ENCODE measurements at regions of chr6 and their contacts with region 1.

Region 1: GRCh38 chr6:159862103-159862502 is 28.7 kb upstream of the MAS1 start:
- DNase-seq: peak in 7 of 9 donors; percentile 46 to 77 (median 69)
- ATAC-seq: peak; percentile 77
- H3K4me3 ChIP-seq: no peak overlapping the region
- H3K4me3 Mint-ChIP-seq: peak overlapping the region; percentile 1 to 75 (median 50)
- H3K27ac ChIP-seq: peak overlapping the region; percentile 4
- H3K27ac Mint-ChIP-seq: peak overlapping the region in 8 of 9 donors; percentile 11 to 83 (median 65)
- H3K4me1 ChIP-seq: peaks cover 0 to 20% of the 10 kb centered on the region in 2 donors
- H3K4me1 Mint-ChIP-seq: peaks cover 14 to 29% (median 25%) of the 10 kb centered on the region in 7 donors
- H3K27me3 ChIP-seq: peaks cover 0 to 7% of the 10 kb centered on the region in 2 donors
- H3K27me3 Mint-ChIP-seq: peaks cover 0 to 17% (median 0%) of the 10 kb centered on the region in 5 donors

Region 2: GRCh38 chr6:158026054-158026900 is 1835.8 kb before region 1 on chr6:
- CTCF ChIA-PET with region 1: no interaction called
- POLR2A ChIA-PET with region 1: no interaction called
- intact Hi-C with region 1: no loop called
- DNase-seq: peak; percentile 67 to 94 (median 82)
- ATAC-seq: peak; percentile 84
- H3K4me3 ChIP-seq: peak overlapping the region; percentile 44
- H3K4me3 Mint-ChIP-seq: peak overlapping the region; percentile 79 to 86 (median 84)
- H3K27ac ChIP-seq: peak overlapping the region; percentile 73
- H3K27ac Mint-ChIP-seq: peak overlapping the region; percentile 88 to 98 (median 97)
- H3K4me1 ChIP-seq: peaks cover 22 to 23% of the 10 kb centered on the region in 2 donors
- H3K4me1 Mint-ChIP-seq: peaks cover 20 to 40% (median 35%) of the 10 kb centered on the region in 7 donors
- H3K27me3 ChIP-seq: no peaks in the 10 kb centered on the region
- H3K27me3 Mint-ChIP-seq: no peaks in the 10 kb centered on the region

Region 3: GRCh38 chr6:159427771-159428170 is 434.3 kb before region 1 on chr6:
- CTCF ChIA-PET with region 1: no interaction called
- POLR2A ChIA-PET with region 1: no interaction called
- intact Hi-C with region 1: no loop called
- DNase-seq: no peak
- ATAC-seq: no peak
- H3K4me3 ChIP-seq: no peak overlapping the region
- H3K4me3 Mint-ChIP-seq: no peak overlapping the region
- H3K27ac ChIP-seq: no peak overlapping the region
- H3K27ac Mint-ChIP-seq: no peak overlapping the region
- H3K4me1 ChIP-seq: no peaks in the 10 kb centered on the region
- H3K4me1 Mint-ChIP-seq: no peaks in the 10 kb centered on the region
- H3K27me3 ChIP-seq: no peaks in the 10 kb centered on the region
- H3K27me3 Mint-ChIP-seq: peaks cover 4 to 33% (median 23%) of the 10 kb centered on the region in 5 donors

Region 4: GRCh38 chr6:159766906-159767305 is 95.2 kb before region 1 on chr6:
- CTCF ChIA-PET with region 1: no interaction called
- POLR2A ChIA-PET with region 1: no interaction called
- intact Hi-C with region 1: no loop called
- DNase-seq: no peak
- ATAC-seq: no peak
- H3K4me3 ChIP-seq: no peak overlapping the region
- H3K4me3 Mint-ChIP-seq: no peak overlapping the region
- H3K27ac ChIP-seq: no peak overlapping the region
- H3K27ac Mint-ChIP-seq: peak overlapping the region in 1 of 9 donors; percentile 55
- H3K4me1 ChIP-seq: peaks cover 6 to 9% of the 10 kb centered on the region in 2 donors
- H3K4me1 Mint-ChIP-seq: peaks cover 11 to 29% (median 14%) of the 10 kb centered on the region in 7 donors
- H3K27me3 ChIP-seq: no peaks in the 10 kb centered on the region
- H3K27me3 Mint-ChIP-seq: no peaks in the 10 kb centered on the region

Region 5: GRCh38 chr6:159941286-159942113 is 79.4 kb after region 1 on chr6:
- CTCF ChIA-PET with region 1: no interaction called
- POLR2A ChIA-PET with region 1: no interaction called
- intact Hi-C with region 1: loop called (anchors 1 kb)
- DNase-seq: peak in 7 of 9 donors; percentile 23 to 55 (median 40)
- ATAC-seq: peak; percentile 85
- H3K4me3 ChIP-seq: no peak overlapping the region
- H3K4me3 Mint-ChIP-seq: no peak overlapping the region
- H3K27ac ChIP-seq: no peak overlapping the region
- H3K27ac Mint-ChIP-seq: no peak overlapping the region
- H3K4me1 ChIP-seq: no peaks in the 10 kb centered on the region
- H3K4me1 Mint-ChIP-seq: peaks cover 0 to 7% (median 0%) of the 10 kb centered on the region in 7 donors
- H3K27me3 ChIP-seq: no peaks in the 10 kb centered on the region
- H3K27me3 Mint-ChIP-seq: peaks cover 0 to 28% (median 3%) of the 10 kb centered on the region in 5 donors

Region 6: GRCh38 chr6:160041608-160042007 is 179.5 kb after region 1 on chr6:
- CTCF ChIA-PET with region 1: no interaction called
- POLR2A ChIA-PET with region 1: no interaction called
- intact Hi-C with region 1: loop called in 1 of 2 experiments (anchors 10 kb)
- DNase-seq: peak in 2 of 9 donors; percentile 17 to 27
- ATAC-seq: peak; percentile 29
- H3K4me3 ChIP-seq: no peak overlapping the region
- H3K4me3 Mint-ChIP-seq: no peak overlapping the region
- H3K27ac ChIP-seq: no peak overlapping the region
- H3K27ac Mint-ChIP-seq: peak overlapping the region in 1 of 9 donors; percentile 39
- H3K4me1 ChIP-seq: peaks cover 0 to 7% of the 10 kb centered on the region in 2 donors
- H3K4me1 Mint-ChIP-seq: peaks cover 5 to 35% (median 30%) of the 10 kb centered on the region in 7 donors
- H3K27me3 ChIP-seq: no peaks in the 10 kb centered on the region
- H3K27me3 Mint-ChIP-seq: no peaks in the 10 kb centered on the region

Region 7: DNA sequence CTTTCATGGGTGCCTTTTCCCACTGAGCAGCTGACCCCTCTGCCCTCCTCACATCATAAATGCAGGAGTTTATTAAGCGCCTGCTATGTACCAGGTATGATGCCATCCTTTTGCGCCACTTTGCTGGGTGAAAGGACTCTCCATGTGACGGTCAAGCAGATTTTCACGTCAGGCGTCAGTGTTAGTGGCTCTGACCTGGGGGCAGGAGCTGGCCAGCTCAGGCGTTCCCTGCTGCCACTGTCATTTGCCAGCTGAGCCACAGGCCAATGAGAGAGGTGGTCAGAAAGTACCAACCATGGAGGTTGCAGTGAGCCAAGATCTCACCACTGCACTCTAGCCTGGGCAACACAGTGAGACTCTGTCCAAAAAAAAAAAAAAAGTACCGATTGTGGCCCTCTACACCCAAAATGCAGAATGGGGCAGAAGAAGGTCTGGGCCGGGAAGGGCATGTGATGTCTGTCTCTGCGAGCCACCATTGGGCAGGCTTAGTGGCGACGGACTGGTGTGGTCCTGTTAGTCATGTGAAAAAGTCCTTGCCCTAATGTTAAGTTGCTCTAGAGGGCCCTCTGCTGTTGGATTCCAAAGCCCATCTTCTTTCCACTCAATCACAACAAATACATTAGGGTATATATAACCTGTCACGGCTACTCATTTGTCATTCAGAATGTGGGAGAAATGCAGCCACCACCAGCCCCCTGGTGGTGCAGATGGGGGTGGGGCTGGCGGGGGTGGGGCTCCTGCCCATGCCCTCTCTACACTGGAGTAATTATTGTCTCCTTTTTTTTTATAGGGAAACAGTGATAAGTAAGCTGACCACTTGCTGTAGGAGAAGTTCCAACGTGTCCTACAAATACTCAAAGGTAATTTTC is 241.1 kb after region 1 on chr6:
- CTCF ChIA-PET with region 1: interaction called, 3 read pairs
- POLR2A ChIA-PET with region 1: no interaction called
- intact Hi-C with region 1: loop called (anchors 1 kb)
- DNase-seq: peak in 2 of 9 donors; percentile 5 to 20
- ATAC-seq: peak; percentile 55
- H3K4me3 ChIP-seq: no peak overlapping the region
- H3K4me3 Mint-ChIP-seq: no peak overlapping the region
- H3K27ac ChIP-seq: no peak overlapping the region
- H3K27ac Mint-ChIP-seq: peak overlapping the region in 2 of 9 donors; percentile 12 to 19
- H3K4me1 ChIP-seq: no peaks in the 10 kb centered on the region
- H3K4me1 Mint-ChIP-seq: peaks cover 4 to 34% (median 22%) of the 10 kb centered on the region in 7 donors
- H3K27me3 ChIP-seq: no peaks in the 10 kb centered on the region
- H3K27me3 Mint-ChIP-seq: no peaks in the 10 kb centered on the region

Region 8: DNA sequence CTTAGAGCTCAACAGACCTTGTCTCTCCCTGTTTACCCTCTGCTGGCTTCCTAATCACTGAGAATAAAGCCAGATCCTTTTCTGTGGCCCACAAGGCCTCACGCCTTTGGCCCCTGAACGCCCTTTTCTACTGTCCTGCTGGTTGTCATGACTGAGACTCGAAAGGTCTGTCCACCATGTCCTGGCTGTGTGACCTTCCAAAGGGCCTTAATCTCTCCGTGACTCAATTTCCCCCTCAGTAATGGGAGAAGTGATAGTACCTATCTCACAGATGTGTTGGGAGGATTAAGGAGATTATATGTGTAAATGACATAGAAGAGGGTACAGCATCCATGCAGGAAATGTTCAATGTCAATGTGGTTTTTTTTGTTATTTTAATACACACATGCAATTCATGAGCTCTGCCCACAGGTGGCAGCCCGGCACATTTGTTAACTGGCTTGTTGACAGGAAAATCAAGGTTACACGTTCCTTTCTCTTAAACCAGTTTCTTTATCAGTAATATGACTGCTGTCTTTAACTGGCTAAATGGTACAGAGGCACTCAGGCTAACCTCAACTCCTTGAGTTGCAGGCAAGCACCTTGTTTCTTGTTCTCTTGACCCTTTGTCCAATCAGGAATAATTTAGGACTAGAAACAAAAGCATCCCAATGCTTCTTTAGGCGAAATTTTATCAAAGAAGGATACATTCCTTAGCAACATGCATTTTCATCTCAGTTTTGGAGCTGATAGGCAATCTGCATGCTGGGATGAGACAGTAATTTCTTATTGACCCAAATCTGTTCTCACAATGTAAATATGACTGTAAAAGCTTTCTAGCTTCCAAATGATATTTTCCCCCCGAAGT is 276.1 kb after region 1 on chr6:
- CTCF ChIA-PET with region 1: interaction called, 3 read pairs
- POLR2A ChIA-PET with region 1: no interaction called
- intact Hi-C with region 1: loop called in 1 of 2 experiments (anchors 1 kb)
- DNase-seq: peak; percentile 29 to 70 (median 61)
- ATAC-seq: peak; percentile 76
- H3K4me3 ChIP-seq: no peak overlapping the region
- H3K4me3 Mint-ChIP-seq: no peak overlapping the region
- H3K27ac ChIP-seq: no peak overlapping the region
- H3K27ac Mint-ChIP-seq: peak overlapping the region in 3 of 9 donors; percentile 9 to 65 (median 28)
- H3K4me1 ChIP-seq: peaks cover 0 to 4% of the 10 kb centered on the region in 2 donors
- H3K4me1 Mint-ChIP-seq: peaks cover 0 to 10% (median 9%) of the 10 kb centered on the region in 7 donors
- H3K27me3 ChIP-seq: no peaks in the 10 kb centered on the region
- H3K27me3 Mint-ChIP-seq: peaks cover 0 to 6% (median 0%) of the 10 kb centered on the region in 5 donors

Region 9: DNA sequence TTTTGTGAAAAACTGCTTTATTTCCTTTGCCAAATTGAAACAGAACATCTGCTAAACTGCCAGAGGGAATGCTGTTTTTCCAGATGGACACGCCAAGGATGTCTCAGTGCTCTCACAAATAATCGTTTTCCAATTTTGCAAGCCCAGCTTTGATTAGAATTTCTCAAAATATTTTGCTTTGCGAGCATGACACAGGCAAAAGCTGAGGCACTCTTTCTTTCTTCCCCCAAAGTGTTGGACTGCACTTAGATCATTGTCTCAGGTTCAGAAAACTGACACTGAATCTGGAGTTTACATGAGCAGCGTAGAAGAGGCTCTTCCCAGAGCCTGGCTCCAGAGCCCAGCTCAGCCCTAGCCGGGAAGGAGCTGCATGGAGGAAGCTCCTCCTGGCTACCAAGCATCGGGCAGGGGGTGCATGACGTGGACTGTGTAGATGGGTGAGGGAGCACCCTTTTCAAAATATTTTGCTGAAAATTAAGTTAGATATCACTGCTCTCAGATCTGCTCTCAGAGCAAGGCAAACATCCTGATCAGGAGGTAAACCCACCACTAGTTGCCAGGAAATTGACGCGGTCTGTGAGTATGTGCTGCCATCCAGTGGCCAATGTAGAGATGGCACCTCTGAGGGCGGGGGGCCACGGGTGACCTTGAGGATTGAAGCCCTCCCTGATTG is 593.6 kb after region 1 on chr6:
- CTCF ChIA-PET with region 1: interaction called, 7 read pairs
- POLR2A ChIA-PET with region 1: interaction called, 3 read pairs
- intact Hi-C with region 1: loop called (anchors 1 kb)
- DNase-seq: peak; percentile 54 to 78 (median 70)
- ATAC-seq: peak; percentile 93
- H3K4me3 ChIP-seq: no peak overlapping the region
- H3K4me3 Mint-ChIP-seq: no peak overlapping the region
- H3K27ac ChIP-seq: no peak overlapping the region
- H3K27ac Mint-ChIP-seq: no peak overlapping the region
- H3K4me1 ChIP-seq: peaks cover 29 to 30% of the 10 kb centered on the region in 2 donors
- H3K4me1 Mint-ChIP-seq: peaks cover 0 to 37% (median 27%) of the 10 kb centered on the region in 7 donors
- H3K27me3 ChIP-seq: no peaks in the 10 kb centered on the region
- H3K27me3 Mint-ChIP-seq: peaks cover 0 to 55% (median 5%) of the 10 kb centered on the region in 5 donors

Region 10: GRCh38 chr6:160534050-160534696 is 672.1 kb after region 1 on chr6:
- CTCF ChIA-PET with region 1: interaction called, 3 read pairs
- POLR2A ChIA-PET with region 1: no interaction called
- intact Hi-C with region 1: loop called in 1 of 2 experiments (anchors 5 kb)
- DNase-seq: peak; percentile 2 to 55 (median 37)
- ATAC-seq: peak; percentile 86
- H3K4me3 ChIP-seq: no peak overlapping the region
- H3K4me3 Mint-ChIP-seq: no peak overlapping the region
- H3K27ac ChIP-seq: no peak overlapping the region
- H3K27ac Mint-ChIP-seq: no peak overlapping the region
- H3K4me1 ChIP-seq: no peaks in the 10 kb centered on the region
- H3K4me1 Mint-ChIP-seq: no peaks in the 10 kb centered on the region
- H3K27me3 ChIP-seq: no peaks in the 10 kb centered on the region
- H3K27me3 Mint-ChIP-seq: peaks cover 0 to 18% (median 5%) of the 10 kb centered on the region in 5 donors

Measured in naive thymus-derived CD4-positive, alpha-beta T cell (primary cell).